GM18951 (cell line): ENCODE measurements at regions of chr5 and their contacts with region 1.

Region 1: GRCh38 chr5:64634997-64635686 is 55.2 kb upstream of the SHISAL2B start:
- POLR2A ChIP-seq: no peak

Region 2: GRCh38 chr5:64229163-64229774 is 405.9 kb before region 1 on chr5:
- in situ Hi-C with region 1: no loop called
- POLR2A ChIP-seq: no peak

Region 3: DNA sequence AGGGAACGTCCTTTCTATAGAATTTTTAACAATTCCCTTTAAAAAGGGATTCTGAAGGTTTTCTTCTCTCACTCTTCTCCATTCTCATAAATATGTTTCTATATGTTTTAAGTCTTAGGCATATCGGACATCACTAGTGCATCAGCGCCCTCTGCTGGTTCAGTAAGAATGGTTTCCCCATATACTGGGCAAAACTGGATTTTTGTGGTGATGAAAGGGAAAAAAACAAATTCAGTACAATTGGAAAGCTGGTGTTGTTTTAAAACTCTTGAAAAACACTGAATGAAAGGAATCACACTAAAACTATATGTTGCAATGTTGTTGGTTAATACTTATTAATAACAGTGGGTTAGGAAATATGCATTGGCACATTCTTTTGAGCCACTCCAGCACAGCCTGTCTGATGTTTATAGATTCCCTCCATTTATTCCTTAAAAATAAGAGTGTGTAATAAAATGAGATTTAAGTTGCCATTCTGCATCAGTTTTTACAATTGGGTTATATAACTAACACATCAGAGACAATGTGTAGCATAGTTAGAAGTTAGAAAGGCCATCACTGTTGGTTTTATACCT is 149.4 kb after region 1 on chr5:
- in situ Hi-C with region 1: loop called (anchors 10 kb)
- POLR2A ChIP-seq: no peak